GM12878 (cell line): ENCODE measurements at regions of chr2 and their contacts with region 1.

Region 1: GRCh38 chr2:204415406-204416181 is 129.7 kb upstream of the PARD3B start:
- DNase-seq: no peak
- ATAC-seq: no peak
- H3K4me3 ChIP-seq: no peak overlapping the region
- H3K27ac ChIP-seq: no peak overlapping the region
- H3K4me1 ChIP-seq: no peaks in the 10 kb centered on the region
- H3K27me3 ChIP-seq: no peaks in the 10 kb centered on the region
- CTCF ChIP-seq: no peak
- EP300 ChIP-seq: no peak
- POLR2A ChIP-seq: no peak
- RAD21 ChIP-seq: no peak

Region 2: GRCh38 chr2:204391710-204392109 is 23.9 kb before region 1 on chr2:
- CTCF ChIA-PET with region 1: no interaction called
- POLR2A ChIA-PET with region 1: no interaction called
- RAD21 ChIA-PET with region 1: no interaction called
- SMC1A ChIA-PET with region 1: no interaction called
- in situ Hi-C with region 1: no loop called
- intact Hi-C with region 1: loop called (anchors 1 kb)
- DNase-seq: no peak
- ATAC-seq: no peak
- H3K4me3 ChIP-seq: no peak overlapping the region
- H3K27ac ChIP-seq: no peak overlapping the region
- H3K4me1 ChIP-seq: no peaks in the 10 kb centered on the region
- H3K27me3 ChIP-seq: no peaks in the 10 kb centered on the region
- CTCF ChIP-seq: no peak
- EP300 ChIP-seq: no peak
- POLR2A ChIP-seq: no peak
- RAD21 ChIP-seq: no peak

Region 3: GRCh38 chr2:204722207-204722606 is 306.6 kb after region 1 on chr2:
- CTCF ChIA-PET with region 1: no interaction called
- POLR2A ChIA-PET with region 1: no interaction called
- RAD21 ChIA-PET with region 1: no interaction called
- SMC1A ChIA-PET with region 1: no interaction called
- in situ Hi-C with region 1: no loop called
- intact Hi-C with region 1: no loop called
- DNase-seq: no peak
- ATAC-seq: no peak
- H3K4me3 ChIP-seq: no peak overlapping the region
- H3K27ac ChIP-seq: no peak overlapping the region
- H3K4me1 ChIP-seq: no peaks in the 10 kb centered on the region
- H3K27me3 ChIP-seq: no peaks in the 10 kb centered on the region
- CTCF ChIP-seq: no peak
- EP300 ChIP-seq: no peak
- POLR2A ChIP-seq: no peak
- RAD21 ChIP-seq: no peak